HepG2 (cell line): ENCODE measurements at regions of chr22 and their contacts with region 1.

Region 1: DNA sequence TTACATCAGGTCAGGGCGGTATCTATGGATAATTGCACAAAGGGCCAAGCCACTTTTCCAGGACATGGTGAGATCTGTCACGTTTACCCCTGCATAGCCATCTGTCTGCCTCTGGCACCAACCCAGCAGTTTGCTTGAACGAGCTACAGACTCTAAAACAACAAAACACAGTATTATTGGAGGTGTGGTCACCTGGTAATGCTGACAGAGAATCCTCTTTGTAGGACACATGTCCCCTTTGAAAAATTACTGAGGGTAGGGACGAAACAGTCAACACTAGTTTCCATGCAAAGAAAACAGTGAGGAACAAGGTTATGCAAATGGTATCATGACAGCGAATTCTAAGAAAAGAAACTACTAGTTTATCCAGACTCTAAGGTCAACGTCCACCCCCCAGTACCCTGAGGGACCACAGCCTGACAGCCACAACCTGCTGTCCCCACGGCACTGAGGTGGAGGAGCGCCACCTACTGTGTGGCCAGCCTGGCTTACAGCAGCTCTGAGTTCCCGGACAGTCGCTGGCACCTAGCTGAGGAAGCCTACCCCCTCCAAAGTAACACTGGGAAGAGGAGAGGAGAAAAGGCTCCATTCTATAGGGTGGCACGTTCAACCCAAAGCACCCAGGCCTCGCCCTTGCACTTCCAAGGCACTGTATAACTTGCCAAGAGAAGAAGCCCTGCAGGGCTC is 117.4 kb upstream of the BID start:
- DNase-seq: peak; percentile 7
- ATAC-seq: peak; percentile 87
- H3K4me3 ChIP-seq: no peak overlapping the region
- H3K27ac ChIP-seq: no peak overlapping the region
- H3K4me1 ChIP-seq: peaks cover 39% of the 10 kb centered on the region
- H3K27me3 ChIP-seq: no peaks in the 10 kb centered on the region
- CTCF ChIP-seq: peak; percentile 84
- EP300 ChIP-seq: no peak
- POLR2A ChIP-seq: no peak
- RAD21 ChIP-seq: peak; percentile 55; the same call in 1 of the 2 replicates

Region 2: DNA sequence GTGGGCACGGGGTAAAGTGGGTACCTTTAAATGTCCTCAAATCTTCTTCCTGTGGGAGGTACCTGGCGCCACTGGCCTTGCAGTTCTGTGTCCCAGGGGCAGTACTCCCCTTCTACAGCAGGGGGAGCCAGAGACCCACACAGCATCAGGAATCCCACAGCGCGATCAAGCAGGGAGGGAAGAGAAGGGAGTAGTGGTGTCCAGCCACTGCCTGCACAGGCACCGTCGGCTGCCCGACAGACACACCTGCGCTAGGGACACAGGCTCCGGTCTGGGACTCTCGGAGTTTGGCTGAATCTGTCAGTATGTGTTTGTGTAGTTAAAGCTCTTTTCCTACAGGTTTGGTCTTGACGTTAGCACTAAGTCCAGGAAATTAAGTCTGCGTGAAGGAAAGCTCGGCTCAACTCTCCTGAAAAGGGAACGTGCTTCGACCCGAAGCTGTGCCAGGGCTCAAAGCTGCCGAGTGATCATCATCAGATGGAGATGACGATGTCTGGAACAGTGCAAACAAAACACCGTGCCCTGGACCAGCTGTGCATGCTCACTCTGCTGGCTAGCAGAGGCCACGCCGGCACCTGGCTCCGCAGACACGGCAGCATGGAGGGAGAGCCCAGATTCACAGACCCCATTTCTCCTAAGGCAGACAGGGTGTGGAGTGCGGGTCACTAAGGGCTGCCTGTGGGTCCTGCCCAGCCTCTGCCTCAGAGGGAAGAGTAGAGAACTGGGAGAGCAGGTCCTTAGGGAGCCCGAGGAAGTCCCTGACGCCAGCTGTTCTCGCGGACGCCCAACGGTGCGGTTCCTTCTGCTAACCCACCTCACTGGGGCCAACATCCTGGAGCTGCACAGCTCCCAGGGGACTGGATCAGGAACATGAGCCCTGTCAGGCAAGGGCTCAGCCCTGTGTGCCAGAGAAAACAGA is 61.3 kb before region 1 on chr22:
- CTCF ChIA-PET with region 1: no interaction called
- POLR2A ChIA-PET with region 1: no interaction called
- in situ Hi-C with region 1: no loop called
- intact Hi-C with region 1: loop called (anchors 5 kb)
- DNase-seq: peak; percentile 63
- ATAC-seq: peak; percentile 93
- H3K4me3 ChIP-seq: no peak overlapping the region
- H3K27ac ChIP-seq: no peak overlapping the region
- H3K4me1 ChIP-seq: no peaks in the 10 kb centered on the region
- H3K27me3 ChIP-seq: no peaks in the 10 kb centered on the region
- CTCF ChIP-seq: peak; percentile 98
- EP300 ChIP-seq: no peak
- POLR2A ChIP-seq: no peak
- RAD21 ChIP-seq: peak; percentile 94

Region 3: GRCh38 chr22:17847341-17848078 is 44.1 kb before region 1 on chr22:
- CTCF ChIA-PET with region 1: no interaction called
- POLR2A ChIA-PET with region 1: no interaction called
- in situ Hi-C with region 1: no loop called
- intact Hi-C with region 1: no loop called
- DNase-seq: no peak
- ATAC-seq: no peak
- H3K4me3 ChIP-seq: no peak overlapping the region
- H3K27ac ChIP-seq: no peak overlapping the region
- H3K4me1 ChIP-seq: peaks cover 10% of the 10 kb centered on the region
- H3K27me3 ChIP-seq: no peaks in the 10 kb centered on the region
- CTCF ChIP-seq: no peak
- EP300 ChIP-seq: no peak
- POLR2A ChIP-seq: no peak
- RAD21 ChIP-seq: no peak

Region 4: GRCh38 chr22:17950651-17951214 is 59.1 kb after region 1 on chr22:
- CTCF ChIA-PET with region 1: no interaction called
- POLR2A ChIA-PET with region 1: no interaction called
- in situ Hi-C with region 1: no loop called
- intact Hi-C with region 1: loop called (anchors 10 kb)
- DNase-seq: no peak
- ATAC-seq: no peak
- H3K4me3 ChIP-seq: no peak overlapping the region
- H3K27ac ChIP-seq: peak overlapping the region; percentile 16
- H3K4me1 ChIP-seq: peaks cover 64% of the 10 kb centered on the region
- H3K27me3 ChIP-seq: no peaks in the 10 kb centered on the region
- CTCF ChIP-seq: no peak
- EP300 ChIP-seq: no peak
- POLR2A ChIP-seq: no peak
- RAD21 ChIP-seq: no peak